Endothelial cell of umbilical vein (primary cell): ENCODE measurements at regions of chr5 and their contacts with region 1.

Region 1: DNA sequence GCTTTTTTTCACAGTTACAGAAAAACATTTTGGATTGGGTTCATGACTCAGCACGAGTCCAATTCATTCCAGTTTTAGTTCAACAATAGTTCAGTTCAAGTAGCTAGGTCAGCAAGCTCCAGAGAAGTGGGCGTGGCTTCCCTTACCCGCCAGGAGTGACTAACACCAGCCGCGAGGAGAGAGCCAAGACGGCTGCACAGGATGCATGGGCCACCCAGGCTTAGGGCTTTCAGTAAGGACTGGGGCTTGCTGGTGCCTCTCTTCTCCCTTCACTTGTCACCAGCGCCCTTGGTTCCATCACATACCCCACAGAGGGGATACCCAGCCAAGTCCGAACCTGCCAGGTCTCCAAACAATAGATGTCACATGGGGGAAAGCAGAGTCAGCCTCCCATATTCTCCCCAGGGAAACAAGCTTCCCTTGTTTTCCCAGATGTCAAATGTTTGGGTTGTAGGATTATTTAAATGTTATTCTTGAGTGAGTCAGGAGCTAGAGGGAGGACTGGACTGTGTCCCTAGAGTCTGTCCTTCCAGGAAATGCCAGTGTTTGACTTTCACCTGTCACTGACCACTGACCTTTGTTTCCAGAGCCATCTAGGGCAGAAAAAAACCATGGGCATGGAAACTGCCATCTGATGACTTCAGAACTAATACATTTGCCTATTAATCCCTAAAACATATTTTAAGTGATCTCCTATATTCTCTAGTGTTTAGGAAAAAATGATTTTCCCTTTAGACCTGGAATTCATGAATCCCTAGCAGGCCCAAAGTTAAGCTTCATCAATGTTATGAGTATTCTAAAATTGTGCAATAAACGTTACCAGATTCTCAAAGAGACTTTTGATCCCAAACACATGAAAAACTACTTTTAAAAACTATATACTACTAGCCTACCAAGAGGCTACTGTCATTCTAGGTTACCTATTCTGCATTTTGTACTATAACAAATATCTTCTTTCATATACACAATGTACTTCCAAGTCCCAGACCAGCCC is 51.9 kb downstream of the NIPAL4 start:
- DNase-seq: peak; percentile 98
- H3K4me3 ChIP-seq: no peak overlapping the region
- H3K27ac ChIP-seq: peak overlapping the region; percentile 83
- H3K4me1 ChIP-seq: peaks cover 31% of the 10 kb centered on the region
- H3K27me3 ChIP-seq: no peaks in the 10 kb centered on the region
- CTCF ChIP-seq: no peak
- POLR2A ChIP-seq: no peak

Region 2: GRCh38 chr5:156934450-156935211 is 577.3 kb before region 1 on chr5:
- CTCF ChIA-PET with region 1: no interaction called
- POLR2A ChIA-PET with region 1: no interaction called
- dilution Hi-C with region 1: no loop called
- intact Hi-C with region 1: no loop called
- DNase-seq: no peak
- H3K4me3 ChIP-seq: no peak overlapping the region
- H3K27ac ChIP-seq: no peak overlapping the region
- H3K4me1 ChIP-seq: no peaks in the 10 kb centered on the region
- H3K27me3 ChIP-seq: no peaks in the 10 kb centered on the region
- CTCF ChIP-seq: no peak
- POLR2A ChIP-seq: no peak

Region 3: GRCh38 chr5:157528036-157528632 is 16.2 kb after region 1 on chr5:
- CTCF ChIA-PET with region 1: interaction called, 3 read pairs
- POLR2A ChIA-PET with region 1: interaction called, 3 read pairs
- dilution Hi-C with region 1: no loop called
- intact Hi-C with region 1: loop called (anchors 1 kb)
- DNase-seq: peak; percentile 85
- H3K4me3 ChIP-seq: no peak overlapping the region
- H3K27ac ChIP-seq: no peak overlapping the region
- H3K4me1 ChIP-seq: peaks cover 7% of the 10 kb centered on the region
- H3K27me3 ChIP-seq: no peaks in the 10 kb centered on the region
- CTCF ChIP-seq: no peak
- POLR2A ChIP-seq: no peak

Region 4: GRCh38 chr5:157563373-157563928 is 51.5 kb after region 1 on chr5:
- CTCF ChIA-PET with region 1: interaction called, 10 read pairs
- POLR2A ChIA-PET with region 1: no interaction called
- dilution Hi-C with region 1: no loop called
- intact Hi-C with region 1: loop called (anchors 1 kb)
- DNase-seq: peak; percentile 52
- H3K4me3 ChIP-seq: no peak overlapping the region
- H3K27ac ChIP-seq: peak overlapping the region; percentile 56
- H3K4me1 ChIP-seq: peaks cover 21% of the 10 kb centered on the region
- H3K27me3 ChIP-seq: no peaks in the 10 kb centered on the region
- CTCF ChIP-seq: no peak
- POLR2A ChIP-seq: no peak

Region 5: GRCh38 chr5:157575381-157576020 is 63.6 kb after region 1 on chr5 and contains the start of gene ADAM19:
- CTCF ChIA-PET with region 1: interaction called, 3 read pairs
- POLR2A ChIA-PET with region 1: no interaction called
- dilution Hi-C with region 1: no loop called
- intact Hi-C with region 1: loop called (anchors 2 kb)
- DNase-seq: peak; percentile 68
- H3K4me3 ChIP-seq: peak within 1 kb of the TSS; percentile 57 to 69 (median 63)
- H3K27ac ChIP-seq: peak within 1 kb of the TSS; percentile 25
- H3K4me1 ChIP-seq: peaks cover 10% of the 10 kb centered on the region
- H3K27me3 ChIP-seq: peaks cover 7% of the 10 kb centered on the region in 2 experiments
- CTCF ChIP-seq: no peak
- POLR2A ChIP-seq: peak; percentile 56
- total RNA-seq, gene ADAM19: 22.6 and 23.8 TPM in 2 replicates

Region 6: DNA sequence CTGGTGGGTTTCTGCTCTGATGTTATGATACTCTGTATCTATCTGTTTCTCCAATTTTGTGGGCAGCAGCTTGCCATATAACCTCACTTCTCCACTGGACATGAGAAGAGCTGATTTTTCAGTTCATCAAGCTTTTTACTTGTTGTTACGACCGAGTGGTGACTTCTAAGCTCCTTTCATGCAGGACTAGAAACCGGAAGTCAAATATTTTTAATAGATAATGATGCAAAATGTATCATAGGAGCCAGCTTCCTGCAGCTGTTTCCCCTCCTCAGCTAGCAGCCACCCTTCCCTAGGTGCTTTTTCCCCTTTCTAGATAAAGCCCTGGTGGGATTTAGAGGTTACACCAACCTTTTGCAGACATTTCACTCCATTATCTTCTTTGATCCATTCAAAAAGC is 80.6 kb after region 1 on chr5:
- CTCF ChIA-PET with region 1: no interaction called
- POLR2A ChIA-PET with region 1: interaction called, 3 read pairs
- dilution Hi-C with region 1: no loop called
- intact Hi-C with region 1: loop called (anchors 5 kb)
- DNase-seq: peak; percentile 75
- H3K4me3 ChIP-seq: peak overlapping the region in 1 of 3 experiments; percentile 39
- H3K27ac ChIP-seq: peak overlapping the region; percentile 90
- H3K4me1 ChIP-seq: peaks cover 37% of the 10 kb centered on the region
- H3K27me3 ChIP-seq: no peaks in the 10 kb centered on the region
- CTCF ChIP-seq: no peak
- POLR2A ChIP-seq: peak; percentile 48

Region 7: GRCh38 chr5:157651623-157652549 is 139.9 kb after region 1 on chr5 and contains the start of gene SOX30:
- CTCF ChIA-PET with region 1: no interaction called
- POLR2A ChIA-PET with region 1: no interaction called
- dilution Hi-C with region 1: no loop called
- intact Hi-C with region 1: loop called (anchors 5 kb)
- DNase-seq: peak; percentile 46
- H3K4me3 ChIP-seq: peak within 1 kb of the TSS in 2 of 3 experiments; percentile 22 to 38
- H3K27ac ChIP-seq: no peak within 1 kb of the TSS
- H3K4me1 ChIP-seq: no peaks in the 10 kb centered on the region
- H3K27me3 ChIP-seq: no peaks in the 10 kb centered on the region
- CTCF ChIP-seq: peak; percentile 20 to 50
- POLR2A ChIP-seq: no peak
- total RNA-seq, gene SOX30: not detected in 2 replicates

Region 8: GRCh38 chr5:157670662-157671591 is 159.0 kb after region 1 on chr5 and contains the start of gene C5orf52:
- CTCF ChIA-PET with region 1: no interaction called
- POLR2A ChIA-PET with region 1: no interaction called
- dilution Hi-C with region 1: no loop called
- intact Hi-C with region 1: loop called (anchors 5 kb)
- DNase-seq: peak; percentile 54
- H3K4me3 ChIP-seq: peak within 1 kb of the TSS; percentile 41 to 63 (median 47)
- H3K27ac ChIP-seq: no peak within 1 kb of the TSS
- H3K4me1 ChIP-seq: peaks cover 13% of the 10 kb centered on the region
- H3K27me3 ChIP-seq: peaks cover 7% of the 10 kb centered on the region in 2 experiments
- CTCF ChIP-seq: no peak
- POLR2A ChIP-seq: no peak
- total RNA-seq, gene C5orf52: not detected in 2 replicates

Region 9: GRCh38 chr5:157930710-157931109 is 418.8 kb after region 1 on chr5:
- CTCF ChIA-PET with region 1: no interaction called
- POLR2A ChIA-PET with region 1: no interaction called
- dilution Hi-C with region 1: no loop called
- intact Hi-C with region 1: no loop called
- DNase-seq: peak; percentile 14
- H3K4me3 ChIP-seq: no peak overlapping the region
- H3K27ac ChIP-seq: no peak overlapping the region
- H3K4me1 ChIP-seq: no peaks in the 10 kb centered on the region
- H3K27me3 ChIP-seq: no peaks in the 10 kb centered on the region
- CTCF ChIP-seq: no peak
- POLR2A ChIP-seq: no peak